Activated CD4-positive, alpha-beta memory T cell treated with anti-CD3 and anti-CD28 coated beads for 36 hours (primary cell): ENCODE measurements at regions of chr19 and their contacts with region 1.

Region 1: DNA sequence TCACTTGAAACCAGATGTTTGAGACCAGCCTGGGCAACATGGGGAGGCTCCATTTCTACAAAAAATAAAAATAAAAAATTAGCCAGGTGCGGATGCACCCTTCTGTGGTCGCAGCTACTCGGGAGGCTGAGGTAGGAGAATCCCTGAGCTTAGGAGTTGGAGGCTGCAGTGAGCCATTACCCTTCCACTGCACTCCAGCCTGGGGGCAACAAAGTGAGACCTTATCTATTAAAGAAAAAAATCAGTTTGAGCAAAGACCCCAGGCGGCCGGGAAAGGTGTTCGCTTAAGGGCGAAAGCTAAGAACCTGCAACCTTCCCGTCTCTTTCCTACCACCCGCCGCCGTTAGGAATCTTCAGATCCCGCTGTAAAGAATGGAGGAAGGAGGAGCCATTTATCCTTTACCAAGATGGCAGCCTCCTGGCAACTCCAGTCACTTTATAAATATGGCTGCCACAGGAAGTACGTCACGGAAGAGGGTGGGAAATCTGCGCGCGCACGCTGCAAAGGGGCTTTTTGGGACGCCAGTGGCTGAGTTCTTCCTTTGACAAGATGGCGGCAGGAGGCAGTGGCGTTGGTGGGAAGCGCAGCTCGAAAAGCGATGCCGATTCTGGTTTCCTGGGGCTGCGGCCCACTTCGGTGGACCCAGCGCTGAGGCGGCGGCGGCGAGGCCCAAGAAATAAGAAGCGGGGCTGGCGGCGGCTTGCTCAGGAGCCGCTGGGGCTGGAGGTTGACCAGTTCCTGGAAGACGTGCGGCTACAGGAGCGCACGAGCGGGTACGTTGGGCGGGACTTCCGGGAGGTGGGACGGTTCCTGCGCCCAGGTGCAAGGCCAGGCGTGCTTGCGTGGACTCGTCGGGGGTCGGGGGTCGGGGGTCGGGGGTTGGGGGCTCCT is at the start of gene NOP53:
- DNase-seq: peak; percentile 98
- H3K4me3 Mint-ChIP-seq: peak within 1 kb of the TSS; percentile 99
- H3K27ac Mint-ChIP-seq: peak within 1 kb of the TSS; percentile 100
- H3K4me1 Mint-ChIP-seq: peaks cover 49% of the 10 kb centered on the region
- H3K27me3 Mint-ChIP-seq: peaks cover 2% of the 10 kb centered on the region
- total RNA-seq, gene NOP53: 259 to 268 TPM

Region 2: GRCh38 chr19:47436712-47437401 is 308.4 kb before region 1 on chr19:
- CTCF ChIA-PET with region 1: interaction called, 17 read pairs
- POLR2A ChIA-PET with region 1: no interaction called
- intact Hi-C with region 1: no loop called
- DNase-seq: peak; percentile 89
- H3K4me3 Mint-ChIP-seq: no peak overlapping the region
- H3K27ac Mint-ChIP-seq: no peak overlapping the region
- H3K4me1 Mint-ChIP-seq: peaks cover 15% of the 10 kb centered on the region
- H3K27me3 Mint-ChIP-seq: peaks cover 38% of the 10 kb centered on the region

Region 3: GRCh38 chr19:47637550-47637949 is 107.7 kb before region 1 on chr19:
- CTCF ChIA-PET with region 1: no interaction called
- POLR2A ChIA-PET with region 1: no interaction called
- intact Hi-C with region 1: no loop called
- DNase-seq: no peak
- H3K4me3 Mint-ChIP-seq: no peak overlapping the region
- H3K27ac Mint-ChIP-seq: no peak overlapping the region
- H3K4me1 Mint-ChIP-seq: peaks cover 15% of the 10 kb centered on the region
- H3K27me3 Mint-ChIP-seq: no peaks in the 10 kb centered on the region

Region 4: DNA sequence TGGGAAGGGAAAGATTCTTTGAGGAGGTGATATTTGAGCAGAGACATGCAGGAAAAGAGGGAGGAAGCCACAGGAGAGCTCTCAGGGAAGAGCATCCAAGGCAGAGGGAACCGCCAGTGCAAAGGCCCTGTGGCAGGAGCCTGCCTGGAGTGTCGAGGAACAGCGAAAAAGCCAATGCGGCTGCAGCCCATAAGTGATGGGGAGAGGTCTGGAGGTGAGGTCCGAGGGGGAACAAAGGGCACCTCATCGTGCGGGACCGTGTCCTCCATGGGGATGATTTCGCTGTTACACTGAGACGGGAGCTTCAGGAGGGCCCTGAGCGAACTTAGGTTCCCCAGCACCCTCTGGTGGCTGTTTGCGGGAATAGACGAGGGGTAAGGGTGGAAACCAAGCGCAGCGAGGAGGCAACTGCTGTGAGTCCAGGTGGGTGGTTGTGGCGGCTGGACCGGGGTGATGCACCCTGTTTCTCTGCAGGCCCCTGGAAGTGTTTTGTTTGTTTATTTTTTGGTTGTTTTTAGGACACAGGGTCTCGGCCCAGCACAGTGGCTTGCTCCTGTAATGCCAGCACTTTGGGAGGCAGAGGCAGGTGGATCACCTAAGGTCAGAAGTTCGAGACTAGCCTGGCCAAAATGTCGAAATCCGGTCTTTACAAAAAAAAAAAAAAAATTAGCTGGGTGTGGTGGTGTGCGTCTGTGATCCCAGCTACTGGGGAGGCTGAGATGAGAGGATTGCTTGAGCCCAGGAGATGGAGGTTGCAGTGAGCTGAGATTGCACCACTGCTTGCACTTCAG is 37.9 kb before region 1 on chr19:
- CTCF ChIA-PET with region 1: interaction called, 183 read pairs
- POLR2A ChIA-PET with region 1: no interaction called
- intact Hi-C with region 1: no loop called
- DNase-seq: peak; percentile 88
- H3K4me3 Mint-ChIP-seq: no peak overlapping the region
- H3K27ac Mint-ChIP-seq: no peak overlapping the region
- H3K4me1 Mint-ChIP-seq: no peaks in the 10 kb centered on the region
- H3K27me3 Mint-ChIP-seq: peaks cover 6% of the 10 kb centered on the region

Region 5: GRCh38 chr19:47725759-47726401 is 19.4 kb before region 1 on chr19:
- CTCF ChIA-PET with region 1: interaction called, 10 read pairs
- POLR2A ChIA-PET with region 1: interaction called, 5 read pairs
- intact Hi-C with region 1: loop called (anchors 1 kb)
- DNase-seq: no peak
- H3K4me3 Mint-ChIP-seq: no peak overlapping the region
- H3K27ac Mint-ChIP-seq: no peak overlapping the region
- H3K4me1 Mint-ChIP-seq: peaks cover 20% of the 10 kb centered on the region
- H3K27me3 Mint-ChIP-seq: peaks cover 29% of the 10 kb centered on the region

Region 6: GRCh38 chr19:47778089-47778953 is 33.1 kb after region 1 on chr19 and contains the start of gene SELENOW:
- CTCF ChIA-PET with region 1: interaction called, 3 read pairs
- POLR2A ChIA-PET with region 1: no interaction called
- intact Hi-C with region 1: loop called (anchors 2 kb)
- DNase-seq: peak; percentile 85
- H3K4me3 Mint-ChIP-seq: peak within 1 kb of the TSS; percentile 95
- H3K27ac Mint-ChIP-seq: peak within 1 kb of the TSS; percentile 92
- H3K4me1 Mint-ChIP-seq: peaks cover 27% of the 10 kb centered on the region
- H3K27me3 Mint-ChIP-seq: no peaks in the 10 kb centered on the region
- total RNA-seq, gene SELENOW: 162 to 174 TPM